ENCODE measurements at regions of chr1 and their contacts with region 1.

Region 1: GRCh38 chr1:23634842-23635651 is 56.6 kb upstream of the RPL11 start:
- DNase-seq: peak in 6 of 10 donors; percentile 11 to 88 (median 46)

Region 2: GRCh38 chr1:23496490-23497181 is 138.4 kb before region 1 on chr1:
- intact Hi-C with region 1: loop called (anchors 2 kb)
- DNase-seq: no peak

Region 3: GRCh38 chr1:23838401-23838866 is 203.4 kb after region 1 on chr1:
- intact Hi-C with region 1: no loop called
- DNase-seq: peak in 8 of 10 donors; percentile 34 to 89 (median 44)